Activated CD4-positive, alpha-beta T cell treated with anti-CD3 and anti-CD28 coated beads, Interleukin-2, amount 10 ng/mL, durations not matched to agents 24 days and 14 days (primary cell): ENCODE measurements at regions of chr5 and their contacts with region 1.

Region 1: DNA sequence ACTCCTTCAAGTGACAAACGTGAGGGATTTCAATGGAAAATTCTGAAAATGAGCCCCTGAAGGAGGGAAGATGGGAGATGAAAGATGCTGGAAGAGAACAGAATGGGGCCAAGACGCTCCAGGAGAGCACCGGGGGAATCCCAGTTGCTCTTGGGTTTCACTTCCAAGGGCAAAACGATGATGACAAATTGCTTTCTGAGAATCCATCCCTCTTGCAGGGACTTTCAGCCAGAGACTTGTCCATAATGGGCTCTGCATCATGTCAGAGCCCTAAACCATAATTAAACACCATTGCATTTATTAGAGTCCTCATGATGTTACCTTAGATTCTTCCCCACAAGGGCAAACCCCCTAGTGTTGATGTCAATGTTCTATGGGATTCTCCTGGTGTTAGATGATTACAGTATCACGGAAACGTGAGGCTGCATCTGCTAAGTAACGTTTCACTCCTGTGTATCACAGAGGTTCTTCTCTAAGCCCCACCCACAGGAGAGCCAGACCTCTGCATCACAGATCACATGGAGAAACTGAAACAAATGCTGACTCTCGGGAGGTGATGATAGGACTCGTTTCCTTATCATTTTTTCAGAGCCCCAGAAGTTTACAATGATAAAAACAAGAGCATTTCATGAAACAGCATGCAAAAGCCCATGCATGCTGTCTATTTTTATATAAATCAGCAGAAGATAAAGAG is 114.4 kb downstream of the TENT4A start:
- DNase-seq: peak; percentile 87
- H3K4me3 Mint-ChIP-seq: peak overlapping the region; percentile 85
- H3K27ac Mint-ChIP-seq: peak overlapping the region; percentile 94
- H3K4me1 Mint-ChIP-seq: peaks cover 55% of the 10 kb centered on the region
- H3K27me3 Mint-ChIP-seq: peaks cover 14% of the 10 kb centered on the region

Region 2: DNA sequence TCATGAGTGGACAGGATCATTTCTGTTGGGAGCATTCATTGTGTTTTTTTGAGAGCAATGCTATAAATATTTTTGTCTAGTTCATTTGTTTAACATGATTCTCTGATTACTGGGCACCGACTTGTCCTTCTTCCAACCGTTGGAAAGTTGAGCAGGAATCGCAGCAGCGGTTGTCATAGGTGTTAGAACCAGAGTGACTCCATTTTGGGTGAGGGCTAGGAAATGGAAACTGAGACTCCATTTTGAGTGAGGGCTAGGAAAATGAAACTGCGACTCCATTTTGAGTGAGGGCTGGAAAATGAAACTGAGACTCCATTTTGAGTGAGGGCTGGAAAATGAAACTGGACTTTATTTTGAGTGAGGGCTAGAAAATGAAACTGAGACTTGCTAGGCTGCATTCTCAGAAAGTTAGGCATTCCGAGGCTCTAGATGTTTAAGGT is 1304.6 kb before region 1 on chr5:
- intact Hi-C with region 1: loop called (anchors 5 kb)
- DNase-seq: peak; percentile 87
- H3K4me3 Mint-ChIP-seq: peak overlapping the region; percentile 37
- H3K27ac Mint-ChIP-seq: peak overlapping the region; percentile 55
- H3K4me1 Mint-ChIP-seq: peaks cover 23% of the 10 kb centered on the region
- H3K27me3 Mint-ChIP-seq: no peaks in the 10 kb centered on the region

Region 3: GRCh38 chr5:6632917-6633468 is 194.7 kb before region 1 on chr5 and contains the starts of genes NSUN2 and SRD5A1:
- intact Hi-C with region 1: loop called (anchors 2 kb)
- DNase-seq: peak; percentile 97
- H3K4me3 Mint-ChIP-seq: peak within 1 kb of the TSS; percentile 100
- H3K27ac Mint-ChIP-seq: peak within 1 kb of the TSS; percentile 99
- H3K4me1 Mint-ChIP-seq: peaks cover 40% of the 10 kb centered on the region
- H3K27me3 Mint-ChIP-seq: no peaks in the 10 kb centered on the region
- total RNA-seq, gene NSUN2: 138 and 140 TPM in 2 replicates
- total RNA-seq, gene SRD5A1: 14.8 and 16.6 TPM in 2 replicates

Region 4: GRCh38 chr5:6765612-6766525 is 61.8 kb before region 1 on chr5:
- intact Hi-C with region 1: loop called (anchors 5 kb)
- DNase-seq: peak; percentile 93
- H3K4me3 Mint-ChIP-seq: no peak overlapping the region
- H3K27ac Mint-ChIP-seq: peak overlapping the region; percentile 25
- H3K4me1 Mint-ChIP-seq: peaks cover 5% of the 10 kb centered on the region
- H3K27me3 Mint-ChIP-seq: no peaks in the 10 kb centered on the region

Region 5: DNA sequence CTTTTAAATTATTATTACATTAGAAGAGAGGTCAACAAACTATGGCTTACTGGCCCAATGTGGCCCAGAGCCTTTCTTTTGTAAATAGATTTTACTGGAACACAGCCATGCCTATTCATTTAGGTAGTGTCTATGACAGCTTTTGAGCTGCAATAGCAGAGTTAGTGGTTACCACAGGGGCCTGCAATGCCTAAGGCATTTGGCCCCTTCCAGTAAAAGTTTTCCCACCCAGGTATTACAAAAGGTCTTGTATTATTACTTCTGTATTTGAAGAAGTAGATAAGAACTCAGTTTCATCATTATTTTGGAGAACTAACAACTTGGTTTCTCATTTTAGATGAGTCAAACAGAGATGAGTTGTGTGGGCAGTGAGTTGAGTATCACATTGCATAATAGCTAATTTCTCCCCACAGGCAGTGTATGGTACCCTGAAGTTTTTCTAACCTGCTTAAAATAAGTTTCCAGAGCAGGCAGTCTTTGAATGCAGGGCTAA is 1050.8 kb after region 1 on chr5:
- intact Hi-C with region 1: loop called (anchors 1 kb)
- DNase-seq: no peak
- H3K4me3 Mint-ChIP-seq: peak overlapping the region; percentile 41
- H3K27ac Mint-ChIP-seq: peak overlapping the region; percentile 72
- H3K4me1 Mint-ChIP-seq: peaks cover 40% of the 10 kb centered on the region
- H3K27me3 Mint-ChIP-seq: no peaks in the 10 kb centered on the region